Sciatic nerve (tissue), 2 donors: ENCODE measurements at regions of chr12 and their contacts with region 1.

Region 1: GRCh38 chr12:82981162-82981561 is 294.5 kb downstream of the TMTC2 start:
- DNase-seq: no peak
- ATAC-seq: no peak

Region 2: DNA sequence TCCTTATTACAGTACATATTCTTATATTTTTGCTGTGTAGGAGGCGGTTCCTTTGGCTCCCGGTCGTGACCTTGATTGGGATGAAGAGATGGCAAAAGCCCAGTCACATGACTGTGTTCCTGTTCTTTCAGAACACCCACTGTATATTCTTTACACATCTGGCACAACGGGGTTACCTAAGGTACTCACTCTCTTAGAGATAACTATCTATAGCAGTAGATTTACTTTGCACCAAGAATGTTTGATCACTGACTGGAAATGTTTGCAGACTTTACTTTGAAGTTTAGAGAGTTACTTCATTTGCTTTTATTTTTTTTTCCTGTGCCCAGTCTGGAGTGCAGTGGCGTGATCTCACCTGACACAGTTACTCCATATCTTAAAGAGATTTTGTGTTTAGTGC is 1838.1 kb before region 1 on chr12:
- intact Hi-C with region 1: no loop called
- DNase-seq: no peak
- ATAC-seq: no peak

Region 3: DNA sequence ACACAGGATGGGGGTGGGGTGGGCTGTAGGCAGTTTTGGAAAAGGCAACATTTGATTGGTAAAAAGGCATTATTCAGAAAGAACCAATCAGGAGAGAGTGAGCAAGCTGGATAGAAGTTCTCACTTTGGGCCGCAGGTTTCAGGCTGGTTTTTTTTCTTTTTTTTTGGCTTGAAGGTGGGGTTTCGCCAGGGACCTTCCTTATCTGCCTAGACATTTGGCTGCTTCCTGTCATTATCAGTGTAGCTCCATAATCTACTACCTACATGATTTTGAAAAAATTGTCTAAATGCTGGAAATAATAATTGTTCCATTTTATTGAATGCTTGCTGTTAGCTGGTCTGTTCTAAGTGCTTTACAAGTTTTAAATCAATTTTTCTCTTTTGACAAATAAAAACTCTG is 354.6 kb after region 1 on chr12:
- intact Hi-C with region 1: loop called (anchors 5 kb)
- DNase-seq: no peak
- ATAC-seq: no peak